CD4-positive, alpha-beta T cell (primary cell): ENCODE measurements at regions of chr2 and their contacts with region 1.

Region 1: GRCh38 chr2:166127217-166128155 is at the start of gene SCN1A:
- DNase-seq: peak in 3 of 14 experiments; percentile 40 to 47 (median 44)
- ATAC-seq: peak; percentile 39
- H3K4me3 ChIP-seq: no peak within 1 kb of the TSS
- H3K4me3 Mint-ChIP-seq: no peak within 1 kb of the TSS
- H3K27ac ChIP-seq: no peak within 1 kb of the TSS
- H3K27ac Mint-ChIP-seq: no peak within 1 kb of the TSS
- H3K4me1 ChIP-seq: no peaks in the 10 kb centered on the region
- H3K4me1 Mint-ChIP-seq: no peaks in the 10 kb centered on the region
- H3K27me3 ChIP-seq: peaks cover 0 to 8% of the 10 kb centered on the region in 2 experiments
- H3K27me3 Mint-ChIP-seq: peaks cover 26% of the 10 kb centered on the region
- CTCF ChIP-seq: peak; percentile 66
- total RNA-seq, gene SCN1A: not detected

Region 2: DNA sequence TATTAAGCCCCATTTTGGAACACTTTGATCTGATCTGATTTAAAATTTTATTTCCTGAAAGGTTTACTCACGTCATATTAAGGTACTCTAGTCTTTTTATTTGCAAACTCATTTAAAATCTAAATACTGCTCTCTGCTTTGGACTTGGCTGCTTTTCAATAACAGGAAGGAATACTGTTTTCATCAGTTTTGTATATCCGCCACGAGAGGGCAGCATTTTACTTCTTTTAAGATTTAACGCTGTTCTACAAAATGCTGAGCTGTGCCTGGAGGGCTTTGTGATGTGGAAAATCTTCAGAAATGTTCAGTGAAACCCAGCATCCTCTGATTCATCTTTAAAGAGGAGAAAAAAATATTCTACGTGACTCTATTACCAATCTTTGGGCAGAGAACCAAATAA is 1134.7 kb before region 1 on chr2:
- CTCF ChIA-PET with region 1: no interaction called
- POLR2A ChIA-PET with region 1: no interaction called
- intact Hi-C with region 1: loop called in 1 of 2 experiments (anchors 2 kb)
- DNase-seq: peak in 8 of 14 experiments; percentile 6 to 73 (median 26)
- ATAC-seq: peak; percentile 57
- H3K4me3 ChIP-seq: no peak overlapping the region
- H3K4me3 Mint-ChIP-seq: no peak overlapping the region
- H3K27ac ChIP-seq: no peak overlapping the region
- H3K27ac Mint-ChIP-seq: no peak overlapping the region
- H3K4me1 ChIP-seq: peaks cover 3% of the 10 kb centered on the region
- H3K4me1 Mint-ChIP-seq: peaks cover 7% of the 10 kb centered on the region
- H3K27me3 ChIP-seq: no peaks in the 10 kb centered on the region
- H3K27me3 Mint-ChIP-seq: no peaks in the 10 kb centered on the region
- CTCF ChIP-seq: peak; percentile 54

Region 3: GRCh38 chr2:165015052-165015642 is 1112.3 kb before region 1 on chr2:
- CTCF ChIA-PET with region 1: no interaction called
- POLR2A ChIA-PET with region 1: no interaction called
- intact Hi-C with region 1: loop called in 1 of 2 experiments (anchors 10 kb)
- DNase-seq: peak; percentile 9 to 66 (median 24)
- ATAC-seq: no peak
- H3K4me3 ChIP-seq: no peak overlapping the region
- H3K4me3 Mint-ChIP-seq: no peak overlapping the region
- H3K27ac ChIP-seq: no peak overlapping the region
- H3K27ac Mint-ChIP-seq: no peak overlapping the region
- H3K4me1 ChIP-seq: no peaks in the 10 kb centered on the region
- H3K4me1 Mint-ChIP-seq: no peaks in the 10 kb centered on the region
- H3K27me3 ChIP-seq: no peaks in the 10 kb centered on the region
- H3K27me3 Mint-ChIP-seq: peaks cover 8% of the 10 kb centered on the region
- CTCF ChIP-seq: peak; percentile 75

Region 4: GRCh38 chr2:165401285-165401852 is 726.1 kb before region 1 on chr2:
- CTCF ChIA-PET with region 1: no interaction called
- POLR2A ChIA-PET with region 1: no interaction called
- intact Hi-C with region 1: loop called (anchors 2 to 5 kb)
- DNase-seq: peak in 4 of 14 experiments; percentile 10 to 69 (median 56)
- ATAC-seq: no peak
- H3K4me3 ChIP-seq: no peak overlapping the region
- H3K4me3 Mint-ChIP-seq: no peak overlapping the region
- H3K27ac ChIP-seq: no peak overlapping the region
- H3K27ac Mint-ChIP-seq: no peak overlapping the region
- H3K4me1 ChIP-seq: no peaks in the 10 kb centered on the region
- H3K4me1 Mint-ChIP-seq: no peaks in the 10 kb centered on the region
- H3K27me3 ChIP-seq: peaks cover 3 to 4% of the 10 kb centered on the region in 2 experiments
- H3K27me3 Mint-ChIP-seq: peaks cover 17% of the 10 kb centered on the region
- CTCF ChIP-seq: peak; percentile 74

Region 5: DNA sequence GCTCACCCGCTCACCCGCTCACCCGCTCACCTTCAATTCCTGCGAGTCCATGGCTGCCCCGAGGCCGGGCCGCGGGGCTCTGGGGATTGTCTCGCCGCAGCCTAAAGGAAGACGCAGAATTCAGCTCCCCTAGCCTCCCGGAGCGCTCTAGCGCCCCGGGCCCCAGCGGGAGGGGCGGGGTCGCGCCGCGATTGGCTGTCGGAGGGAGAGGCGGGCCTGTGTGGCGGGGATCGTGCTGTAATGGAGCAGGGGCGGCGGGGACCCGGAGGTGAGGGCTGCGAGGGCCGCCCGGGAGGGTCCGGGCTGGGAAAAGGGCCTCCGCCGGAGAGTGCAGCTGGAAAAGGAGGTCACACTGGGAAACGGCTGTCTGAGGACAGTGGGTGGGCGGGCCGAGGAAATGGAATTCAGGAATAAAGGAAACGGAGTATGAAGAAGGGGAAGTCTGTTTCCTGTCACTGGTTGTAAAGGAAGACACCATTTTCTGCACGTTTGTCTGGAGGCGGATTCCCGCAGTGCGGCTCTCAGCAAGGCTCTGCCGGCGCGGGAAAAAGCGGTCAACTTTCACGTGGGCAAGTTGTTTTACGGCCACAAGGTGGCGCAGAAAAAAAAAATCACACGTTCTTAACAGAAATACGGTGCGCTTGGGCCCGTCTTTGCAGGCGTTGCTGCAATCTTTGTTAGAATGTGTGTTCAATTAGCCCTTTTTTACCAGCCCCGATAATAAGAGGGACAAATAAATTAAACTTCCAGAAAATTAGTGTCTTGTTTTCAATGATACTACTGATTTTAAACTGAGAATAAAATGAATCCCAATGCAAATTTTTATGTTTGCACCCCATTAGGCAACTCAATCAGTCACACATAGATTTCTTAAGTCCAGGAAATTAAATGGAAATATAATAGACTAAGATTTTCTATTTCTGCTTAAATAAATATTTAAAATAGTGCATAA is 173.6 kb before region 1 on chr2 and contains the start of gene TTC21B:
- CTCF ChIA-PET with region 1: interaction called, 5 read pairs
- POLR2A ChIA-PET with region 1: interaction called, 3 read pairs
- intact Hi-C with region 1: loop called (anchors 2 to 5 kb)
- DNase-seq: peak; percentile 86 to 96 (median 93)
- ATAC-seq: peak; percentile 94
- H3K4me3 ChIP-seq: peak within 1 kb of the TSS; percentile 74
- H3K4me3 Mint-ChIP-seq: peak within 1 kb of the TSS; percentile 76
- H3K27ac ChIP-seq: peak within 1 kb of the TSS; percentile 61 to 81
- H3K27ac Mint-ChIP-seq: no peak within 1 kb of the TSS
- H3K4me1 ChIP-seq: peaks cover 25% of the 10 kb centered on the region
- H3K4me1 Mint-ChIP-seq: peaks cover 20% of the 10 kb centered on the region
- H3K27me3 ChIP-seq: no peaks in the 10 kb centered on the region
- H3K27me3 Mint-ChIP-seq: no peaks in the 10 kb centered on the region
- CTCF ChIP-seq: peak; percentile 82
- total RNA-seq, gene TTC21B: 22.9 to 25.4 TPM

Region 6: DNA sequence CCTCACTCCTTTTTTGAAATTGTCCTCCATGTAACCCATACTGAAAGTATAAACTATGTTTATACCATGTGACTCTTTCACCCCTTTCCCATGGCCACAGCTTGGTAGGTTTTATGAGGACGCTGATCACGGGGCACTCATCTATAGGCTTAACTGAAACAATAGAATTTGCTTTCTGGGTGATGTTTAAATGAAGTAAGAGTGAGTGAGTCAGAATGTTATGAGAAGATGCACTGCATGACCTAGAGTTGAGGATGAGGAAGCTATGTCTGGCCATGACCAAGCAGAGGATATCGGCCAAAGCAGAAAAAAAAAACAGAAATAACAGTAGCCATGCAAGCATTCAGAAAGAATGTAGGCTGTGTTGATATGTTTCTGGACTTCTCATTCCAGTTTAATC is 34.6 kb before region 1 on chr2:
- CTCF ChIA-PET with region 1: no interaction called
- POLR2A ChIA-PET with region 1: no interaction called
- intact Hi-C with region 1: no loop called
- DNase-seq: peak in 2 of 14 experiments; percentile 19 to 38
- ATAC-seq: no peak
- H3K4me3 ChIP-seq: no peak overlapping the region
- H3K4me3 Mint-ChIP-seq: no peak overlapping the region
- H3K27ac ChIP-seq: no peak overlapping the region
- H3K27ac Mint-ChIP-seq: no peak overlapping the region
- H3K4me1 ChIP-seq: no peaks in the 10 kb centered on the region
- H3K4me1 Mint-ChIP-seq: no peaks in the 10 kb centered on the region
- H3K27me3 ChIP-seq: no peaks in the 10 kb centered on the region
- H3K27me3 Mint-ChIP-seq: peaks cover 10% of the 10 kb centered on the region
- CTCF ChIP-seq: no peak